ENCODE measurements at regions of chr2 and their contacts with region 1.

Region 1: GRCh38 chr2:49753344-49753985 is 599.1 kb upstream of the FSHR start:
- DNase-seq: no peak
- H3K4me3 ChIP-seq: no peak overlapping the region
- H3K27ac ChIP-seq: no peak overlapping the region
- H3K4me1 ChIP-seq: no peaks in the 10 kb centered on the region
- H3K27me3 ChIP-seq: no peaks in the 10 kb centered on the region
- CTCF ChIP-seq: no peak
- POLR2A ChIP-seq: no peak

Region 2: DNA sequence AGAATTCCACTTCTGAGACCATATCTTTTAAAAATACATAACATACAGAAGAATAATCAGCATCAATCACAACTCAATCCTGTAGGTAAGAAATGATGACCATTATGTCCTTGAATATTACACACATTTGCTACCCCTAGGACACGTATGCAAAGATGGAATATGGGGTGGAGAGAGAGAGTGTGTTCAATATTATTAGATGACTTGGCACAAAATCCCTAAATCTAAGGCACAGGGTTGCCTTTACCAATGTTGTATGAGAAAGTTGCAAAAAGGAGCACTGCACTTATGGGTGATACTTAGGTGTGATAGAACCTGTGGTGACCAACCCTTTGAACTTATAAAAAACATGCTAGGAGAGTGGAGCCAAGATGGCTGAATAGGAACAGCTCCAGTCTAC is 272.9 kb before region 1 on chr2:
- intact Hi-C with region 1: no loop called
- DNase-seq: no peak
- H3K4me3 ChIP-seq: no peak overlapping the region
- H3K27ac ChIP-seq: no peak overlapping the region
- H3K4me1 ChIP-seq: no peaks in the 10 kb centered on the region
- H3K27me3 ChIP-seq: no peaks in the 10 kb centered on the region
- CTCF ChIP-seq: no peak
- POLR2A ChIP-seq: no peak

Region 3: GRCh38 chr2:49677227-49677626 is 76.2 kb before region 1 on chr2:
- intact Hi-C with region 1: no loop called
- DNase-seq: no peak
- H3K4me3 ChIP-seq: no peak overlapping the region
- H3K27ac ChIP-seq: no peak overlapping the region
- H3K4me1 ChIP-seq: no peaks in the 10 kb centered on the region
- H3K27me3 ChIP-seq: no peaks in the 10 kb centered on the region
- CTCF ChIP-seq: no peak
- POLR2A ChIP-seq: no peak

Region 4: GRCh38 chr2:51673628-51674027 is 1920.2 kb after region 1 on chr2:
- intact Hi-C with region 1: loop called (anchors 5 kb)
- DNase-seq: no peak
- H3K4me3 ChIP-seq: no peak overlapping the region
- H3K27ac ChIP-seq: no peak overlapping the region
- H3K4me1 ChIP-seq: no peaks in the 10 kb centered on the region
- H3K27me3 ChIP-seq: no peaks in the 10 kb centered on the region
- CTCF ChIP-seq: no peak
- POLR2A ChIP-seq: no peak